ENCODE measurements at regions of chr22 and their contacts with region 1.

Region 1: DNA sequence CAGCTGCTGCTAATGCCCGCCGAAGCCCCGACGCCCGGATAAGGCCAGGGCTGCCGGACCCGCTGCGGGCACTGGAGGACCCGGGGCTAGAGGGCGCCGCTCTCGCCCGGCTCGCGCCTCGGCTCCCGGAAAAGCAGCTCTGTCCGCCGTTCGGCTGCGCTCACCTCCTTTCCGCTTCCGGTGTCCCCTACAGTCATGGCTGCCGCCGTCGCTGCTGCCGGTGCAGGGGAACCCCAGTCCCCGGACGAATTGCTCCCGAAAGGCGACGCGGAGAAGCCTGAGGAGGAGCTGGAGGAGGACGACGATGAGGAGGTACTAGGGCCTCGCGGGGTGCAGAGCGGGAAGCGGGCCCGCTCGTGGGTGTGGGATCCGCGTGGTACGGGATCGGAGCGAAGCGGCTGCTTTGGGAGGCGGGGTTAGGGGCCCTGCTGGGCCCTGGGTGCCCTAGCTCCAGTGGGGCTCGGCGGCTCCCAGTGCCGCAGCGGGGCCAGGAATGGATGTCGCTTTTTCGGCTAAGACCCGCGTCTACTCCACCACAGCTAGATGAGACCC is at the start of gene TOMM22:
- DNase-seq: peak; percentile 87
- H3K4me3 Mint-ChIP-seq: peak within 1 kb of the TSS; percentile 90
- H3K27ac Mint-ChIP-seq: peak within 1 kb of the TSS; percentile 92
- H3K4me1 Mint-ChIP-seq: peaks cover 24% of the 10 kb centered on the region
- H3K27me3 Mint-ChIP-seq: no peaks in the 10 kb centered on the region
- total RNA-seq, gene TOMM22: 83.0 to 88.9 TPM

Region 2: GRCh38 chr22:38700270-38700788 is 18.5 kb after region 1 on chr22:
- CTCF ChIA-PET with region 1: interaction called, 21 read pairs
- POLR2A ChIA-PET with region 1: interaction called, 4 read pairs
- DNase-seq: peak; percentile 44
- H3K4me3 Mint-ChIP-seq: peak overlapping the region; percentile 85
- H3K27ac Mint-ChIP-seq: peak overlapping the region; percentile 99
- H3K4me1 Mint-ChIP-seq: peaks cover 61% of the 10 kb centered on the region
- H3K27me3 Mint-ChIP-seq: peaks cover 1% of the 10 kb centered on the region

Region 3: DNA sequence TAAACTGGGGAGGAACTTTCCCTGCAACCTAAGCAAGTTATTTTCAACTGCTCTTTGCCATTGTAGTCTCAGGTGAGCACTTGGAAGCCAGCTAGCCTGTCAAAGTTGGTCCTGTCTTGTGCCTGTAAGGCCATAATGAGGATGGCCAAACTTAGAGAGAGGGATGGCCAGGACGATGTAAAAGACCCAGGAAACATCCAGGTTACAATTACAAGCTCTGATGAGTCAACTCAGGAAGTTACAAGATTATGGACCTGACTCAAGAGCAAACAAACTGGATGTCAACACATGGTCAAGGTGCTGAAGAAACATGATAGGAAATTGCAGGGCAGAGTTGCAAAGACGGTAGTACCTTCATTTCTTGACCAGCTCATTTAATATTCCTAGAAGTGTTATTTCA is 25.5 kb after region 1 on chr22:
- CTCF ChIA-PET with region 1: interaction called, 10 read pairs
- POLR2A ChIA-PET with region 1: no interaction called
- DNase-seq: no peak
- H3K4me3 Mint-ChIP-seq: peak overlapping the region; percentile 80
- H3K27ac Mint-ChIP-seq: peak overlapping the region; percentile 84
- H3K4me1 Mint-ChIP-seq: peaks cover 57% of the 10 kb centered on the region
- H3K27me3 Mint-ChIP-seq: no peaks in the 10 kb centered on the region

Region 4: GRCh38 chr22:38782402-38783094 is 100.7 kb after region 1 on chr22:
- CTCF ChIA-PET with region 1: no interaction called
- POLR2A ChIA-PET with region 1: no interaction called
- DNase-seq: no peak
- H3K4me3 Mint-ChIP-seq: no peak overlapping the region
- H3K27ac Mint-ChIP-seq: no peak overlapping the region
- H3K4me1 Mint-ChIP-seq: peaks cover 10% of the 10 kb centered on the region
- H3K27me3 Mint-ChIP-seq: no peaks in the 10 kb centered on the region

Measured in activated CD4-positive, alpha-beta T cell treated with anti-CD3 and anti-CD28 coated beads, Interleukin-2, amount 10 ng/mL, durations not matched to agents 7 days and 5 days (primary cell).